ENCODE measurements at regions of chr1 and their contacts with region 1.

Region 1: DNA sequence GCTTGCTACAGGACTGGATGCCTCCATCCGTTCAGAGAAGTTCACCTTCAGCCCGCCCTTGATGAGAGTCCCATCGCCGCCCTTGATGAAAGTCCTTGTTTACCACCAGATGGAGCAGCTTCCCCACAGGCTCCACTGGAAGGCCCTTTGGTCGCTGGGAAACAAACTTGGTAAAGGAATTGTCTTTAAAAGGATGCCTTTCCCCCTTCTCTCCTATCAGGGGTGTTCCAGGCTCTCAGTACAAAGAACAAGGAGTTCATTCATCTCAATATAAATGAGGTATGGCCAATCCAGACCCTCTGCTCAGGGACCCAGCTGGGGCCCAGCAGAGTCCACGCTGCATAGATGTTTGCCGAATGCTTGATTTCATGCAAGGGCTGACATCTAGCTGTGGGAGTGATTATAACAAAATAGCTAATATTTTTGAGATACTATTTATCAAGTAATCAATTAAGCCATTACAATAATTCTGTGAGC is 50.8 kb downstream of the CAPN9 start:
- DNase-seq: peak; percentile 60 to 74 (median 72)
- H3K4me3 ChIP-seq: no peak overlapping the region
- H3K27ac ChIP-seq: no peak overlapping the region
- H3K4me1 ChIP-seq: no peaks in the 10 kb centered on the region
- H3K27me3 ChIP-seq: no peaks in the 10 kb centered on the region
- CTCF ChIP-seq: peak; percentile 72 to 82 (median 77)
- EP300 ChIP-seq: no peak
- POLR2A ChIP-seq: no peak

Region 2: GRCh38 chr1:230917284-230918135 is 119.5 kb after region 1 on chr1:
- intact Hi-C with region 1: loop called (anchors 5 kb)
- DNase-seq: peak; percentile 33 to 70 (median 66)
- H3K4me3 ChIP-seq: no peak overlapping the region
- H3K27ac ChIP-seq: no peak overlapping the region
- H3K4me1 ChIP-seq: peaks cover 1% of the 10 kb centered on the region
- H3K27me3 ChIP-seq: no peaks in the 10 kb centered on the region
- CTCF ChIP-seq: peak in 2 of 3 donors; percentile 15 to 65
- EP300 ChIP-seq: no peak
- POLR2A ChIP-seq: no peak

Region 3: GRCh38 chr1:230978491-230979388 is 180.8 kb after region 1 on chr1 and contains the starts of genes ARV1 and TTC13:
- intact Hi-C with region 1: loop called in 1 of 4 experiments (anchors 5 kb)
- DNase-seq: peak; percentile 95 to 99 (median 98)
- H3K4me3 ChIP-seq: peak within 1 kb of the TSS; percentile 50
- H3K27ac ChIP-seq: no peak within 1 kb of the TSS
- H3K4me1 ChIP-seq: peaks cover 1% of the 10 kb centered on the region
- H3K27me3 ChIP-seq: no peaks in the 10 kb centered on the region
- CTCF ChIP-seq: peak in 2 of 3 donors; percentile 15 to 37
- EP300 ChIP-seq: no peak
- POLR2A ChIP-seq: peak; percentile 27
- total RNA-seq, gene ARV1: 9.0 to 14.1 (median 12.3) TPM
- total RNA-seq, gene TTC13: 6.4 to 16.5 (median 10.8) TPM